Activated CD4-positive, alpha-beta T cell treated with anti-CD3 and anti-CD28 coated beads for 36 hours (primary cell): ENCODE measurements at regions of chr14 and their contacts with region 1.

Region 1: GRCh38 chr14:78697341-78697740 is 527.2 kb downstream of the NRXN3 start:
- DNase-seq: no peak
- ATAC-seq: no peak
- H3K4me3 Mint-ChIP-seq: no peak overlapping the region
- H3K27ac Mint-ChIP-seq: no peak overlapping the region
- H3K4me1 Mint-ChIP-seq: no peaks in the 10 kb centered on the region
- H3K27me3 Mint-ChIP-seq: peaks cover 4% of the 10 kb centered on the region

Region 2: DNA sequence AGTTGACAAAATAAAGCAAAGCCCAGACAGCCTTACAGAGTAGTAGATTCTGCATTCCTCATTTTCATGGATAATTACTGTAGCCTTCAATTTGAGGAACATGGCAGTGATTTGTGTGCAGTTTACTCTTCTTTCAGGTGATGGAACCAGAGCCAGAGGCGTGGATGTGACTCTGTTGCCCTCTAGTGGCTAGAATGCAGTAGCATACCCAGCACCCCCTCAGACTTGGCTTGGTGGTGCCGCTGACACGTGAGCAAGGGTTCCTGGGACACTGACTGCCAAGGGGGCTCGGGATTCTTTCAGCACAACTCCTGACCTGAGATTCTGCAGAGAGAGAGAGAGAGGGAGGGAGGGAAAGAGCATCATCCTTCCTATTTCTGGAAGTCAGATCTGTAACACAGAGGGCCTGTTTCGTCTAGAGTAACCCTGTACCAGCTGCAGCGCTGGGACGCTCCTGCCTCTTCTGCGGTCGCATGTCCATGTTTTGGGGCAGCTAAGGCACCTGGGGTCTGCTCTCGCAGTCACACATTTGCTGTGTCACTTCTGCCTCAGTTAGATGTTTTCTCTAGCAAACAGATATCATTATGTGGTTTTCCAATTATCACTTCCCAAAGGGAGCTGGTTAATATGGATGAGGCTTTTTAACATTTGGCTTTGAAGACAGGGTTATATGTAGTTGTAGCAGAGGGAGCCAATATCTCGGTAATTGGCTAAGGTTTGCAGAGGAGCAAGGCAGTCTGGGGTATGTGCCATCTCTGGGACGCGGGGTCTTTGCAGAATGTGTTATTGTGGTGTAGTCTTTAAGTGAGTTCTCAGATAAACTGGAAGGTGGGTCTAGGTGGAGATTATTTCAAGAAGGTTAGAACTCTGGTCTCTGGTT is 99.1 kb before region 1 on chr14:
- CTCF ChIA-PET with region 1: no interaction called
- POLR2A ChIA-PET with region 1: no interaction called
- intact Hi-C with region 1: loop called in 1 of 2 experiments (anchors 5 kb)
- DNase-seq: peak; percentile 67
- ATAC-seq: peak; percentile 88
- H3K4me3 Mint-ChIP-seq: no peak overlapping the region
- H3K27ac Mint-ChIP-seq: no peak overlapping the region
- H3K4me1 Mint-ChIP-seq: no peaks in the 10 kb centered on the region
- H3K27me3 Mint-ChIP-seq: peaks cover 22% of the 10 kb centered on the region